Activated naive CD4-positive, alpha-beta T cell treated with anti-CD3 and anti-CD28 coated beads for 36 hours (primary cell): ENCODE measurements at regions of chr9 and their contacts with region 1.

Region 1: DNA sequence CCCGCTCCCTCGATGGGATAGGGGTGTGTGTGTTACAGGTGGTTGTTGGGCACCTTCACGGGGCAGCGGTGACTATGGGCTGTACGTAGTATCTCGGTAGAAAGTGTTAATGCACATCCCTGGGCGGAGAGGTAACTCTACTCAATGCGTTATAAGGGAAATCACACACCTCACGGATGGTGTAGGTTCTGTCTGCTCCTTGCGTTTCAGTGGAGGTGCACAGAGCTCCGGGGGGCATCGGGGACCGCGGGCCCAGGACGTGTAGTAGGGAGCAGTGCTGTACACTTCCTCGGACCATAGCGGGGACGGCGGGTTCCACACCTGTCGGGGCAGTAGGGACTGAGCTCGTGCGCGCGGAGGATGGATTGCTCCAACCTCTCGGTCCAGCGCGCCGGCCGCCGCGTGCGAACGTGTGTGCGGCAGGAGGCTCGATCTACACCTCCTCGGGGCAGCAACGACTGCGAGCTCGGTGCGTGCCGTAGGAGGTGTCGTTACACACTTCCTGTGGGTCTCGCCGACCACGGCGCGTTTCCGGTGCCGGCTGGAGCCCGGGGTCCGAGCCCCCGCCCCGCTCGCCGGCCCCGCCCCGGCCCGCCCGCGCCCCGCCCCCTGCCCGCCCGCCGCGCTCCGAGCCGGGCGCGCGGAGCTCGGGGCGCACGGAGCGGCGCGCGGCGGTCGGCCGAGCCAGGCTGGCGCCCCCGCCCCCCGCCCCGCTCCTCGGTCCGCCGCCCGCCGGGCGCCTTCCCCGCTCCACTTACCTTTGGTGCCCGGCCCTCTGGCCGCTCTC is at the start of gene KIAA1958:
- DNase-seq: peak; percentile 91
- H3K4me3 Mint-ChIP-seq: peak within 1 kb of the TSS; percentile 93
- H3K27ac Mint-ChIP-seq: peak within 1 kb of the TSS; percentile 88
- H3K4me1 Mint-ChIP-seq: peaks cover 34% of the 10 kb centered on the region
- H3K27me3 Mint-ChIP-seq: no peaks in the 10 kb centered on the region
- total RNA-seq, gene KIAA1958: 6.7 to 7.6 TPM

Region 2: GRCh38 chr9:111661150-111661801 is 825.1 kb before region 1 on chr9 and contains the start of gene GNG10:
- CTCF ChIA-PET with region 1: no interaction called
- intact Hi-C with region 1: loop called (anchors 10 kb)
- DNase-seq: peak; percentile 63
- H3K4me3 Mint-ChIP-seq: peak within 1 kb of the TSS; percentile 97
- H3K27ac Mint-ChIP-seq: peak within 1 kb of the TSS; percentile 95
- H3K4me1 Mint-ChIP-seq: peaks cover 31% of the 10 kb centered on the region
- H3K27me3 Mint-ChIP-seq: peaks cover 2% of the 10 kb centered on the region
- total RNA-seq, gene GNG10: 20.6 to 21.1 TPM

Region 3: GRCh38 chr9:112546149-112547012 is 60.0 kb after region 1 on chr9:
- CTCF ChIA-PET with region 1: no interaction called
- intact Hi-C with region 1: loop called (anchors 5 kb)
- DNase-seq: peak; percentile 15
- H3K4me3 Mint-ChIP-seq: no peak overlapping the region
- H3K27ac Mint-ChIP-seq: no peak overlapping the region
- H3K4me1 Mint-ChIP-seq: peaks cover 14% of the 10 kb centered on the region
- H3K27me3 Mint-ChIP-seq: no peaks in the 10 kb centered on the region

Region 4: DNA sequence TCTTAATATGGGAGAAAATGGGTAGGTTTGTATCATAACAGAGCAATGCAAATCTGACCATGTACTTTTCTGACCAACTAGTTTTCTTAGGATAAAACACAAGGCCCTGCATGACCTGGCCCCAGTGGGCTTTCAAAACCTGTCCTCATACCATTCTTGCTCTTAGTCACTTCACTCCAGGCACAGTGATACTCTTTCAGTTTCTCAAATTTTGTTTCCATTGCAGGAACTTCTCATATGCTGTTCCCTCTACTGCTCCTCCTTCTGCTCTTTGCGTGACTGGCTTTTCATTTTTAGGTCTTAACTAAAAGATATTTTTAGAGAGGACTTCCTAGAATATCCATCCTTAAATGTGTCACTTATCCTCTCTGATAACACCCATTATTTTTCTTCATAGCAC is 119.1 kb after region 1 on chr9:
- CTCF ChIA-PET with region 1: no interaction called
- intact Hi-C with region 1: loop called (anchors 5 kb)
- DNase-seq: peak; percentile 15
- H3K4me3 Mint-ChIP-seq: peak overlapping the region; percentile 1
- H3K27ac Mint-ChIP-seq: peak overlapping the region; percentile 9
- H3K4me1 Mint-ChIP-seq: peaks cover 17% of the 10 kb centered on the region
- H3K27me3 Mint-ChIP-seq: no peaks in the 10 kb centered on the region

Region 5: GRCh38 chr9:112717661-112718341 is 231.4 kb after region 1 on chr9 and contains the start of gene INIP:
- CTCF ChIA-PET with region 1: no interaction called
- intact Hi-C with region 1: loop called (anchors 1 kb)
- DNase-seq: peak; percentile 97
- H3K4me3 Mint-ChIP-seq: peak within 1 kb of the TSS; percentile 97
- H3K27ac Mint-ChIP-seq: peak within 1 kb of the TSS; percentile 94
- H3K4me1 Mint-ChIP-seq: peaks cover 23% of the 10 kb centered on the region
- H3K27me3 Mint-ChIP-seq: no peaks in the 10 kb centered on the region
- total RNA-seq, gene INIP: 31.1 to 33.4 TPM

Region 6: GRCh38 chr9:112731971-112732370 is 245.6 kb after region 1 on chr9:
- CTCF ChIA-PET with region 1: no interaction called
- intact Hi-C with region 1: no loop called
- DNase-seq: no peak
- H3K4me3 Mint-ChIP-seq: no peak overlapping the region
- H3K27ac Mint-ChIP-seq: no peak overlapping the region
- H3K4me1 Mint-ChIP-seq: no peaks in the 10 kb centered on the region
- H3K27me3 Mint-ChIP-seq: no peaks in the 10 kb centered on the region

Region 7: GRCh38 chr9:112764344-112764743 is 277.9 kb after region 1 on chr9:
- CTCF ChIA-PET with region 1: no interaction called
- intact Hi-C with region 1: no loop called
- DNase-seq: no peak
- H3K4me3 Mint-ChIP-seq: no peak overlapping the region
- H3K27ac Mint-ChIP-seq: no peak overlapping the region
- H3K4me1 Mint-ChIP-seq: peaks cover 6% of the 10 kb centered on the region
- H3K27me3 Mint-ChIP-seq: no peaks in the 10 kb centered on the region